ENCODE measurements at regions of chr4 and their contacts with region 1.

Region 1: GRCh38 chr4:26806331-26806730 is 54.3 kb upstream of the STIM2 start:
- DNase-seq: no peak
- CTCF ChIP-seq: no peak

Region 2: GRCh38 chr4:26819478-26820095 is 13.3 kb after region 1 on chr4:
- CTCF ChIA-PET with region 1: interaction called, 15 read pairs
- POLR2A ChIA-PET with region 1: no interaction called
- DNase-seq: no peak
- CTCF ChIP-seq: no peak

Region 3: GRCh38 chr4:26860157-26860921 is 54.0 kb after region 1 on chr4 and contains the start of gene STIM2:
- CTCF ChIA-PET with region 1: no interaction called
- POLR2A ChIA-PET with region 1: no interaction called
- DNase-seq: peak; percentile 91
- CTCF ChIP-seq: peak; percentile 38